ENCODE measurements at regions of chr12 and their contacts with region 1.

Region 1: DNA sequence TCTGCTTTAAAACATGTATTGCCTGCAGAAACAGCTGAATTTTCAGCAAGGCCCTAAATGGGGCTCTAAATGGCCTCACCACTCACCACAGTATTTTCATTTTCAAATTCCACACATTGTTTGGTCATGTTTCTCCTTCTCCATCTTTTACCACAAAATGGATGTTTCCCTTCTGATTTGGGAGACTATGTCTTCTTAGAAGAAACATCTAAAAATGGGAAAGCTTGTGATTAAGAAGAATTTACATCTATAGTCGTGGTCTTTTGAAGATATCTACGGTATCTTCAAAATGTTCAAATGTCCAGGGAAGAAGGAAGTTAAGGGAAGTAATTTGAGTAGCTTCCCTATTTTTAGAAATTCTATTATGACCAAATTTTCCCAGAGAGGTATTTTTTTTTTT is 20.7 kb upstream of the TUBA1C start:
- DNase-seq: no peak
- ATAC-seq: no peak
- H3K4me3 ChIP-seq: no peak overlapping the region
- H3K27ac ChIP-seq: no peak overlapping the region
- H3K4me1 ChIP-seq: no peaks in the 10 kb centered on the region
- CTCF ChIP-seq: no peak
- EP300 ChIP-seq: no peak
- POLR2A ChIP-seq: no peak
- RAD21 ChIP-seq: no peak

Region 2: DNA sequence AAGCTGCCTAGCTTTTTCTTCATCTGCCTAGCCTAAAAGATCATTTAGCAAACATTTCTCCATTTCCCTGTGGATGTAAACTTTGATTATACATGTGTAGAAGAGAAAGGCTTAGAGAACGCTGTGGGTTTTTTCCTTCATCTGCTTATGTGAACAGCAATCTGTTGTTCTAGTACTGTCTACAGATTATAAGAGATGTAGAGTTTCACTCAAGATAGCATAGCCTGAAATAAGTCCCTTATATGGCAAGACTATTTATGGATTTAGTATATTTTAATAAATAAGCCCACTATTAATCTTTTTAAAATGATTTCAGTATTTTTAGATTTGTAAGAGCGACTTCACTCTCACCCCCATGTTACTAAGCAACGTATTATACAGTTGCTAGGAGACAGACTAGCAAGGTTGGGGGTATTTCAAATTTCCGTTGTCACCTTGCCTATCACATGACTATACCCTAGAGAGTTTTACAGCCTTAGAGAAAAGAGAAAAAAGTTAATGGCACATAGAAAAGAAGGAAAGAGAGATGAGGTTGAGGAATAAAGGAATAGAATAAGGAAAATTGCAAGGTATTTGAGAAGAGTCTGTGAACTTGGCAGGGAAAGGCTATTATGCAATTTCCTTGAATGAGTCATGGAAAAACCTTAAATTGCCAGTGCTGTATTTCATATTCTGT is 43.1 kb before region 1 on chr12:
- CTCF ChIA-PET with region 1: no interaction called
- POLR2A ChIA-PET with region 1: no interaction called
- DNase-seq: peak; percentile 71 to 84
- ATAC-seq: peak; percentile 81 to 91
- H3K4me3 ChIP-seq: 0 out of 3 replicates have a peak overlapping the region, but pooled peaks have one; percentile 1
- H3K27ac ChIP-seq: peak overlapping the region; percentile 57 to 72; a peak in 5 of 6 replicates
- H3K4me1 ChIP-seq: peaks cover 30% of the 10 kb centered on the region
- CTCF ChIP-seq: no peak
- EP300 ChIP-seq: no peak
- POLR2A ChIP-seq: no peak
- RAD21 ChIP-seq: no peak

Region 3: GRCh38 chr12:49264738-49265515 is 20.8 kb after region 1 on chr12 and contains the start of gene TUBA1C:
- CTCF ChIA-PET with region 1: interaction called, 11 read pairs
- POLR2A ChIA-PET with region 1: interaction called, 3 read pairs
- DNase-seq: peak; percentile 91 to 97
- ATAC-seq: peak; percentile 80 to 83
- H3K4me3 ChIP-seq: peak within 1 kb of the TSS; percentile 71
- H3K27ac ChIP-seq: peak within 1 kb of the TSS; percentile 94 to 100
- H3K4me1 ChIP-seq: peaks cover 36% of the 10 kb centered on the region
- CTCF ChIP-seq: no peak
- EP300 ChIP-seq: no peak
- POLR2A ChIP-seq: peak; percentile 99
- RAD21 ChIP-seq: no peak
- polyA plus RNA-seq, gene TUBA1C: 1,183 and 1,488 TPM in 2 replicates